AG04450 (cell line): ENCODE measurements at regions of chr1 and their contacts with region 1.

Region 1: DNA sequence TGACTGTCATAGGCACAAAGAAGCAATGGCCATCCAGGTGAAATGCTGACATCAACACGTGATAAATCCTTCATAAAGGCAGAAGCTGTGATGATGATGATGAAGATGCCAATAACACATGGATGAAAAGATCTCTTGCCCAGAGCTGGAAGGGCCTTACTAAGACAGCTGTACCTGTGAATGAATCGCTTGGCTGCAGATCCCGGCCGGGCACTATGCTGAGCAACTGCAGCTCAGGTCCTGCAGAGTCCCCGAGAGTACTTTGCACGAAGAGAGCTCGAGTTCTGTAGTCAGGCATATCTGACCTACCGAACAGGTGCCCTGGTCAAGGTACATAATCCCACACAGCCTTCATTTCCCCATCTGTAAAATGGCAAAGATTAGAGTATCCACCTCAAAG is 48.8 kb downstream of the PGBD5 start:
- DNase-seq: no peak
- H3K4me3 ChIP-seq: no peak overlapping the region
- H3K27ac ChIP-seq: no peak overlapping the region
- H3K27me3 ChIP-seq: no peaks in the 10 kb centered on the region
- CTCF ChIP-seq: no peak

Region 2: DNA sequence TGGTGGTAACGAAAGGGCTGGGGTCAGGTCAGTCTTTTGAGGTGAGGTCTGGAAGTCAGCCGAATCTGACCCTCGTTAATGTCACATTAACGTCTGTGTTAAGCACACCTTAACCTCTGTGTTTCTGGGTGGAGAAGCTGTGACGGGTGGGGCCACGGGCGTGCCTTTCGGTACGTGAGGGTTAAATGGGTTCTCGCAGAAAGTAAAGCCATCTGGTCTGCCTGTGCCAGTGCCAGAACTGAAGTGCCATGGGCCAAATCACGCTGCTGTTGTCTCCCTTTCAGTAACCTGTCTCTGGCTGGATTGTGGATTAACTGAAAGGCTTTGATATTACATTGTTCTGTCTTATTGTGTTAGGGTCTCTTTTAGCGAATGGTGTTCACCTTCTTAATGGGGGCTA is 736.9 kb before region 1 on chr1:
- CTCF ChIA-PET with region 1: no interaction called
- POLR2A ChIA-PET with region 1: interaction called, 11 read pairs
- DNase-seq: no peak
- H3K4me3 ChIP-seq: no peak overlapping the region
- H3K27ac ChIP-seq: no peak overlapping the region
- H3K27me3 ChIP-seq: no peaks in the 10 kb centered on the region
- CTCF ChIP-seq: no peak